Ascending aorta (tissue), 2 donors: ENCODE measurements at regions of chr1 and their contacts with region 1.

Region 1: DNA sequence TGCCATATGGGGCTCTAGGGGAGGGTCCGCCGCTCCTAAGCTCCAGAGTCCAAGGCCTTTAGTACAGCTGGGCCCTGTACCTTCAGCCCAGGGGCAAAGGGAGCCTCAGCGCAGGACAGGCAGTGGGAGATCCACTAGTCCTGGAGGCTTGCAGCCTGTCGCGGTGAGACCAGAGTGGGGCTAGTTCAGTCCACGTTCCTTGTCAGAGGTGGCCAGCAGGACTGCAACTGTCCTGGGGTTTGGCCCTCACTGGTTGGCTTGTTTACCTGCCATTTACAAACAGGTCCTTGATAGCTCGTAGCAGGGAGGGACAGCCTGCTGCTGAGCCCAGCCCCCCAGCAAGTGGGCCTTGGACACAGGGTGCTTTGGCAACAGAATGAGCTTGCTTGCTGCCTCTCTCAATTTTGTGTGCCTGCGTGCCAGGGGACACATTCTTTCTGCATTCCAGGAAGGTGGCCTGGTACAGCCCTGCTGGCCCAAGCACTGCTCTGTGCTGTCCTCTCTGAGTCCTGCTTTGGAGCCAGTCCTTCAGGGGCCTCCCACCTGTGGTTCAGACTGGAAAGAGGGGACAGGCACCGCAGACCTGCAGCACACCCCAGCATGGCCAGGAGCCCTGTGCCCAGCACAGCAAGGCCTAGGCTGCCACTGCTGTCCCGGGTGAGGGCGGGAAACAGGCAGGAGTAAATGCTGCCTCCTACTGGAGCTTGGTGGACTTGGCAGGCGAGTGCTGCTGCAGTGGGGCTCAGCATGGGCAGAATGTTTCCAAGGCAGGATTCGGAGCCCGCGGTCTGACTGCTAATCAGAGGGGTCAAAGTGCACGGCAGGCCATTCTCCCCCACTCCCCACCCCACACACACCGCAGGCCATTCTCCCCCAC is 15.2 kb downstream of the H6PD start:
- DNase-seq: no peak
- H3K4me3 ChIP-seq: peak overlapping the region in 1 of 2 donors; percentile 16
- H3K27ac ChIP-seq: peak overlapping the region; percentile 51 to 53
- H3K4me1 ChIP-seq: peaks cover 16 to 30% of the 10 kb centered on the region in 2 donors
- H3K27me3 ChIP-seq: no peaks in the 10 kb centered on the region
- CTCF ChIP-seq: peak; percentile 43 to 65 (median 46)

Region 2: GRCh38 chr1:9110669-9111356 is 139.0 kb before region 1 on chr1:
- intact Hi-C with region 1: loop called (anchors 1 kb)
- DNase-seq: peak; percentile 47 to 94
- H3K4me3 ChIP-seq: no peak overlapping the region
- H3K27ac ChIP-seq: no peak overlapping the region
- H3K4me1 ChIP-seq: peaks cover 0 to 6% of the 10 kb centered on the region in 2 donors
- H3K27me3 ChIP-seq: no peaks in the 10 kb centered on the region
- CTCF ChIP-seq: peak; percentile 86 to 93 (median 93)

Region 3: GRCh38 chr1:9181176-9181906 is 68.4 kb before region 1 on chr1:
- intact Hi-C with region 1: loop called (anchors 5 kb)
- DNase-seq: peak in 1 of 2 donors; percentile 82
- H3K4me3 ChIP-seq: peak overlapping the region; percentile 72 to 89
- H3K27ac ChIP-seq: peak overlapping the region; percentile 75
- H3K4me1 ChIP-seq: peaks cover 7 to 18% of the 10 kb centered on the region in 2 donors
- H3K27me3 ChIP-seq: no peaks in the 10 kb centered on the region
- CTCF ChIP-seq: peak; percentile 92 to 96 (median 96)

Region 4: DNA sequence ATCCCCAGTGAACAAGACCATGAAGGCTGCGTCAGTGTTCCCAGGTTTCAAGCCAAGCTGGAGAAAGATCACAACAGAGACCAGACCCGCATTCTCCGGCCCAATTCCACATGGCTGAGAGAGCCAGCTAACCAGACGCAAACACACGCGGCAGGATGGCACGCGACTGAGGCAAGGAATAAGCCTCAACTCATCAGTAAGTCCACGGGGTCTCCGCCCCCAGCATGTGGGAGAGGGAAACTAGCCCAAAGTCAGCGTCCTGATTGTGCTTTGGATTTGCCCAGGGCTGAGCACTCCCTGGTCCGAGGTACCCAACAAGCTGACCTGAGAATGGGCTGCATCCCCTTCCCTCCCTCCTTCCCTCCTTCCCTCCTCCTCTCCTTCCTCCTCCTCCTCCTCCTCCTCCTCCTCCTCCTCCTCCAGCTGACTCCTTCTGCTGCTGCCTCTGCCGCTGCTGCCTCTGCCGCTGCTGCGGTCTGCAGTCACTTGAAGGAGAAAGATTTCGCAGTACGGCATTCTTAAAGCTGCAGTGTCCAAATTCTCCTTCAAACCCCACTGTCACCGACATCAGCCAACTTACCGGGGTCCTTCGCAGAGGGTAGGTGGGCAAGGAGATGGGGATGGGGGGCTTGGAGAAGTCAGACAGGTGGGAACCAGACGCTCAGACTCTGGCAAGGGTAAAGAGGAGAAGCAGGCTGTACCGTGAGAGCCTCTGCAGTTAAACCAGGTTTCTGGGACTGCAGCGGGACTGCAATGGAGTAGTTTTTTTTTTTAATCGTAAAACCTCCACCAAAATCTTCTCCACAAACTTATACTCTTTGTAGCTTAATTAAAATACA is 48.2 kb before region 1 on chr1:
- intact Hi-C with region 1: loop called (anchors 5 kb)
- DNase-seq: no peak
- H3K4me3 ChIP-seq: peak overlapping the region; percentile 48 to 64
- H3K27ac ChIP-seq: peak overlapping the region in 1 of 2 donors; percentile 19
- H3K4me1 ChIP-seq: peaks cover 14% of the 10 kb centered on the region in 2 donors
- H3K27me3 ChIP-seq: no peaks in the 10 kb centered on the region
- CTCF ChIP-seq: no peak